MCF 10A (cell line): ENCODE measurements at regions of chr10 and their contacts with region 1.

Region 1: DNA sequence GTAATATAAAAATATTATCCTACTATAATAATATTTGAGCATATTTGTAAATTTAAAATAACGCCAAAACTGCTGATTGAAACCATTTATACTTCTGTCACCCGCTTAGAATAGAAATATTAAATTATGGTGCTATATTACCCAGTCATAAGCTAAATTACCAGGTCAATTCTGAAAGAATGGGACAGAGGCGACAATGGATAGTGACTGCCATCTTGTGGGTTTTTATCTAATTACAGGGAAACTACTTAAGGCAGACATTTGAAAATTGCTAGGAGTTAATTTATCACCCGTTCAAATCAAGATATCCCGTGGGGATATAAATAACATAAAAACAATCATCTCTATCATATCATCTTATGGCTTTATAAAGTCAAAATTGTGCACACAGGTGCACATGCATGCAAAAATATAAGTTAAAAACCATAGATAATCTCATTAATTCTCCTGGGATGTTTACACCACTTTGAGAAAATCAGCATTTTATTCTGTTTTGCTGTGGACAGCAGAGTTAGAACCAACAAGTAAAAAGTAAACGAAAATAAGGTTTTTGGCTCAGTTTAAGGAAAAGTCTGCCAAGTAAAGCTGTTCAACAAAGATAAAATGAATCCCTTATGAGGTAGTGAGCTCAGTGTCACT is 41.3 kb upstream of the HPSE2 start:
- DNase-seq: peak; percentile 34
- H3K4me3 Mint-ChIP-seq: no peak overlapping the region
- H3K27ac Mint-ChIP-seq: no peak overlapping the region
- H3K4me1 Mint-ChIP-seq: no peaks in the 10 kb centered on the region
- H3K27me3 Mint-ChIP-seq: peaks cover 12% of the 10 kb centered on the region
- CTCF ChIP-seq: peak; percentile 66

Region 2: DNA sequence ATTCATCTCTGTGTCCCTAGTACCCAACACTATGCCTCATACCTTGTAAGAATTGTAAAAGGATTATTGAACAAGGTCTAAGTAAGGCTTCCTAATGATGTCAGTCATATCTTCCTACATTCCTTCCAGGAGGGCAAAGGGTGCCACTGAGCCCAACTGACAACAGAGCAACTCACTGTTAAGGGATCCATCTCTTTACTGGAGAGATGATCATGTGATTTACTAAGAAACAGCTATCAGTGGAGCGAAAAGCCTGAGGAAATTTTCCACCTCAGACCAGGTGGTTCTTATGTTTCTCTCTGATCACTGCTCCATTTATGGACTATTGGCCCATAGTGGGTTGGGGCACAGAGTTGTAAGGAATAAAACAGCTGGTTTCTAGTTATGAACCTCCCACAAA is 13.3 kb after region 1 on chr10:
- CTCF ChIA-PET with region 1: interaction called, 15 read pairs
- POLR2A ChIA-PET with region 1: interaction called, 3 read pairs
- intact Hi-C with region 1: no loop called
- DNase-seq: no peak
- H3K4me3 Mint-ChIP-seq: no peak overlapping the region
- H3K27ac Mint-ChIP-seq: no peak overlapping the region
- H3K4me1 Mint-ChIP-seq: no peaks in the 10 kb centered on the region
- H3K27me3 Mint-ChIP-seq: no peaks in the 10 kb centered on the region
- CTCF ChIP-seq: no peak

Region 3: GRCh38 chr10:99303899-99304861 is 27.2 kb after region 1 on chr10:
- CTCF ChIA-PET with region 1: no interaction called
- POLR2A ChIA-PET with region 1: no interaction called
- intact Hi-C with region 1: no loop called
- DNase-seq: no peak
- H3K4me3 Mint-ChIP-seq: no peak overlapping the region
- H3K27ac Mint-ChIP-seq: no peak overlapping the region
- H3K4me1 Mint-ChIP-seq: no peaks in the 10 kb centered on the region
- H3K27me3 Mint-ChIP-seq: peaks cover 11% of the 10 kb centered on the region
- CTCF ChIP-seq: no peak

Region 4: GRCh38 chr10:99370993-99371392 is 94.0 kb after region 1 on chr10:
- CTCF ChIA-PET with region 1: no interaction called
- POLR2A ChIA-PET with region 1: no interaction called
- intact Hi-C with region 1: loop called (anchors 10 kb)
- DNase-seq: peak; percentile 43
- H3K4me3 Mint-ChIP-seq: no peak overlapping the region
- H3K27ac Mint-ChIP-seq: no peak overlapping the region
- H3K4me1 Mint-ChIP-seq: peaks cover 11% of the 10 kb centered on the region
- H3K27me3 Mint-ChIP-seq: peaks cover 42% of the 10 kb centered on the region
- CTCF ChIP-seq: peak; percentile 47